H1 (cell line): ENCODE measurements at regions of chr16 and their contacts with region 1.

Region 1: GRCh38 chr16:75550211-75550662 is 5.8 kb downstream of the TMEM231 start:
- DNase-seq: peak in 1 of 2 experiments; percentile 58
- H3K4me3 ChIP-seq: no peak overlapping the region
- H3K27ac ChIP-seq: peak overlapping the region; percentile 65; the same call in 1 of the 2 replicates
- H3K4me1 ChIP-seq: peaks cover 0 to 5% (median 0%) of the 10 kb centered on the region in 4 experiments; a peak in 5 of 7 replicates
- H3K27me3 ChIP-seq: no peaks in the 10 kb centered on the region
- CTCF ChIP-seq: peak; percentile 62 to 92 (median 78)
- EP300 ChIP-seq: no peak
- POLR2A ChIP-seq: 0 out of 3 replicates have a peak, but pooled peaks of 1 of the 2 experiments have one; percentile 28
- RAD21 ChIP-seq: peak; percentile 81 to 87

Region 2: GRCh38 chr16:75471723-75472633 is 78.3 kb before region 1 on chr16:
- CTCF ChIA-PET with region 1: interaction called, 11 read pairs
- POLR2A ChIA-PET with region 1: interaction called, 7 read pairs
- DNase-seq: no peak
- H3K4me3 ChIP-seq: peak overlapping the region in 1 of 4 experiments; percentile 44; a peak in 1 of 8 replicates
- H3K27ac ChIP-seq: peak overlapping the region; percentile 56; the same call in 1 of the 2 replicates
- H3K4me1 ChIP-seq: peaks cover 1 to 6% (median 5%) of the 10 kb centered on the region in 4 experiments; a peak in 6 of 7 replicates
- H3K27me3 ChIP-seq: no peaks in the 10 kb centered on the region
- CTCF ChIP-seq: peak; percentile 70 to 83 (median 72)
- EP300 ChIP-seq: no peak
- POLR2A ChIP-seq: no peak
- RAD21 ChIP-seq: peak; percentile 71 to 78

Region 3: GRCh38 chr16:75534560-75535205 is 15.6 kb before region 1 on chr16:
- CTCF ChIA-PET with region 1: interaction called, 41 read pairs
- POLR2A ChIA-PET with region 1: interaction called, 5 read pairs
- DNase-seq: no peak
- H3K4me3 ChIP-seq: no peak overlapping the region
- H3K27ac ChIP-seq: no peak overlapping the region
- H3K4me1 ChIP-seq: peaks cover 0 to 6% (median 0%) of the 10 kb centered on the region in 4 experiments; a peak in 1 of 7 replicates
- H3K27me3 ChIP-seq: no peaks in the 10 kb centered on the region
- CTCF ChIP-seq: no peak
- EP300 ChIP-seq: no peak
- POLR2A ChIP-seq: no peak
- RAD21 ChIP-seq: no peak

Region 4: DNA sequence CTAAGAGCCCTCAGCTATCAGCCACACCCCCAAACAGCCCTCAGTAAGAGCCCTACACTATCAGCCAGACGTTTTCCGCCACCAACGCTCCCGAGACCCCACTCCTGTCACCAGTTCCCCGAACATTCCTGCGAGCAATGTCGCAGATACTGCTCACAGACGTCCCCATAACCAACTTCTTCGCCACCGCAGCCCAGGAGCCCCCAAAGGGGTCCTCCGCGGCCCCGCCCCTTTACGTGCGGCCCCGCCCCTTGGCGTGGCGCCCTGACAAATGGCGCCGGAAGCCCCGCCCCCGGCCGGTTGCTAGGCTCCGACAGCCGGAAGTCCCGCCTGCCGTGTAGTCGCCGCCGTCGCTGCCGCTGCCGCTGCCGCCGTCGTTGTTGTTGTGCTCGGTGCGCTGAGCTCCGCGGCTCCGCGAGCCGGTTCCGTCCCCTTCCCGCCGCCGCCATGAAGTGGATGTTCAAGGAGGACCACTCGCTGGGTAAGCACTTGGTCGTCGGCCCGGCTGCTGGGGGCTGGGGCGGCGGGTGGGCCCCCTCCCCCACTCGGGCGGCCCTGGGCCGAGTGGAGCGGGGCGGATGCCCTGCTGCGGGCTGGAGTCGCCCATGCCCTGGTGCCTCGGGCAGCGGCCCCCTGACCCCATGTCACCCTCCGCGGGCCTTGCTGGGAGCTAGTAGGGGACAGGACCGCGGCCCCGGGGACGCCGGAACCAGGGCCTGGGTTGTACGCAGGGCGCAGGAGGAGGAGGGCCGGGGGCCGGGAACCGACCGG is 16.0 kb after region 1 on chr16 and contains the start of gene GABARAPL2:
- CTCF ChIA-PET with region 1: interaction called, 18 read pairs
- POLR2A ChIA-PET with region 1: interaction called, 21 read pairs
- DNase-seq: peak; percentile 63 to 98
- H3K4me3 ChIP-seq: peak within 1 kb of the TSS; percentile 80 to 94 (median 88)
- H3K27ac ChIP-seq: no peak within 1 kb of the TSS
- H3K4me1 ChIP-seq: peaks cover 1 to 8% (median 3%) of the 10 kb centered on the region in 4 experiments; a peak in 5 of 7 replicates
- H3K27me3 ChIP-seq: no peaks in the 10 kb centered on the region
- CTCF ChIP-seq: no peak
- EP300 ChIP-seq: no peak
- POLR2A ChIP-seq: peak in 1 of 2 experiments; percentile 51; a peak in 1 of 3 replicates
- RAD21 ChIP-seq: peak in 1 of 2 experiments; percentile 0; a peak in 1 of 4 replicates
- total RNA-seq, gene GABARAPL2: 67.4 and 71.3 TPM in 2 replicates

Region 5: DNA sequence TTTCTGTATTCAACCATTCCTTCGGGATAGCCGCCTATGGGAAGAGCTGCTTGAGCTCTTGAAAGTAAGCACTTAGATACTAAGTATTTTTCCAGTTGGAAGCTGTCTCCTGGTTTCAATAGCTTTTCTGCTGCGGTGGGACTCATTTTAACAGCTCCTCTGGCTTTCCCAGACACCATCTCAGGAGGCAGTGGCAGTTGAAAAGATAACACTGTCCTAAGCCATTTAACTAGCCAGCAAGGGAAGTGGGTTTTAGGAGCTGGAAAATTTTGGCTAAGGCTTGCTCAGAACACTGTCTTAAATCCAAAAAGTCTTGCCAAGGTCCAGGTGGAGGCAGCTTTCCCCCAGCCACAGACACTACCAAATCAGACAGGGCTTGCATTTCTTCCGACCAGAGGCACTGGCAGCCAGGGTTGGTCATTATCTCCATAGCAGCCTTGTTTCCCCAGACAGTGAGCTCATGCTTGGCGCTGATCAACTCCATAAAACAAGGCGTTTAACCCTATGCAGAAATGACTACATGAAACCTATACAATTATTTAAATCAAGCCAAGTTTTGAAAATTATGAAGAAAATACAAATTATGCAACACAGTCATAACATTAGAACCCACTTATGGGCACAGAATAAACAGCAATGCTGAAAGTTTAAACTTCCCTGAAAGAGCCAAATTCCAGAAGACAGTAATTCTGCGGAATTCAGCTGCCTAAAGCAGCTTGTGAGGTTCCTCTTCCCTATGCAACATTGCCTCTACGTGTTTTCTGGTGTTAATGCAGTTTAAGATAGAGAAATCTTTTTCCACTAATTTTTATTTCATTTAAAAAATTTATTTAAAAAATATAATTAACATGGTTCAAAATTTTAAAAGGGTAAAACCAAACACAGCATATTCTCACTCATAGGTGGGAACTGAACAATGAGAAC is 40.9 kb after region 1 on chr16:
- CTCF ChIA-PET with region 1: interaction called, 12 read pairs
- POLR2A ChIA-PET with region 1: no interaction called
- DNase-seq: no peak
- H3K4me3 ChIP-seq: no peak overlapping the region
- H3K27ac ChIP-seq: no peak overlapping the region
- H3K4me1 ChIP-seq: peaks cover 5 to 18% (median 16%) of the 10 kb centered on the region in 4 experiments; a peak in 6 of 7 replicates
- H3K27me3 ChIP-seq: no peaks in the 10 kb centered on the region
- CTCF ChIP-seq: no peak
- EP300 ChIP-seq: no peak
- POLR2A ChIP-seq: no peak
- RAD21 ChIP-seq: peak; percentile 32 to 52; a peak in 2 of 4 replicates

Region 6: GRCh38 chr16:75727221-75727620 is 177.0 kb after region 1 on chr16:
- CTCF ChIA-PET with region 1: no interaction called
- POLR2A ChIA-PET with region 1: no interaction called
- DNase-seq: no peak
- H3K4me3 ChIP-seq: no peak overlapping the region
- H3K27ac ChIP-seq: no peak overlapping the region
- H3K4me1 ChIP-seq: no peaks in the 10 kb centered on the region
- H3K27me3 ChIP-seq: no peaks in the 10 kb centered on the region
- CTCF ChIP-seq: no peak
- EP300 ChIP-seq: no peak
- POLR2A ChIP-seq: no peak
- RAD21 ChIP-seq: no peak